ENCODE measurements at regions of chr1 and their contacts with region 1.

Region 1: DNA sequence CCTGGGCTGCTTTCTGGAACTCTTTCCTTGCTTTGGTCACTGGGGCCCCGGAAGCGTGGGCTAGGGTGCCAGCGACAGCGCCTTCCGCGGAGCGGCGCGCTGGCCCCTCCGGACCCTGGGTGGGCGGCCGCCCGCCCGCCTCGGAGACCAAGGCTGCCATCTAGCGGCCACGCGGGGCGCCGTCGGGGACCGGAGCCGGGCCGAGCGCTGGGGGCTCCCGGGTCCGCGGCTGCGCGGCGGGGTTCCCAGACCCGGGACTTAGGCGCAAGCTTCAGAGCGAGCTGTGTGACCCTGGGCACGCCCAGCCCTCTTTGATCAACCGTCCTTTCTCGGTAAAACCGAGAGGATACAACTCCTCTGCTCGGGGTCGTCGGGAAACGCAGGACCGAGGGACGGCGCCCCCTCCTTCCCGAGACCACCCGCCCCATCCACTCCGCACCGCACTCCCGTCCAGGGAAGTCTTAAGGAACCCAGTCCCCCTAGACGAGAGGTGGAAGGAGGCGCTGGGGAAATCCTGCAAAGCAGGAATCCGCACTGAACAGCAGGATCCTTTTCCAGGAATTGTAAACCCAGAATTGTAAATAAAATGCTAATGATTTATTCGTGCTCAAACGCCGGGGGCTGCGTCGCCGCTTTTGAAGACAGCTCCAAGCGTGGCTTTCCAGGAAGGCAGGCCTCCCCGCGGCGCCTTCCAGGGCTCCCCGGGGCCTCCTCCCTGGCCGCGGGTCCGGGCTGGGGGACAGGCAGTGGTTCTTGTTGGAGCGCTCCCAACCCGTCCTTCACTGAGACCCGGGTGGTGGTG is 41.2 kb downstream of the RRAGC start:
- DNase-seq: no peak
- H3K4me3 ChIP-seq: peak overlapping the region in 2 of 4 donors; percentile 27 to 39
- H3K27ac ChIP-seq: no peak overlapping the region
- H3K4me1 ChIP-seq: peaks cover 0 to 14% (median 13%) of the 10 kb centered on the region in 4 donors
- H3K27me3 ChIP-seq: peaks cover 33 to 69% (median 41%) of the 10 kb centered on the region in 3 donors
- CTCF ChIP-seq: peak in 2 of 4 experiments; percentile 24 to 77
- EP300 ChIP-seq: no peak
- POLR2A ChIP-seq: no peak

Region 2: DNA sequence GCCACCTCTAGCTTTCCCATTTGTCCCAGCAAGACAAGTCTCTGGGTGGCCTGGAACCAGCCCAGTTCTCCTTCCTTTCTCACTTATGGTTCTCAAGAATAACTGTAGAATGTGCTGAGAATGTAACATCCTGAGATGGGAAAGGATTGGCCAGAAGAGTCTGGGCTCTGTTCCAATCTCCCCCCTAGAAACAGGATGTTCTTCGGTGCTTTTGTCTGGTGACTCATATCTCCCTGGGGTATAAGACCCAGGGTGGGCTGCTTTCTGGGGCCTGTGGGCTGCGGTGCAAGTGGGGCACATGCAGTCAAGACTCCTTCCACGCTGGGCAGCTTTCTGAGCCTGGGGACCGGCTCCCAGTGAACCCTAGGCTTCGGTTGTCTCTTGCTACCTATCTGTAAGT is 520.5 kb before region 1 on chr1:
- intact Hi-C with region 1: no loop called
- DNase-seq: no peak
- H3K4me3 ChIP-seq: no peak overlapping the region
- H3K27ac ChIP-seq: no peak overlapping the region
- H3K4me1 ChIP-seq: no peaks in the 10 kb centered on the region
- H3K27me3 ChIP-seq: peaks cover 0 to 52% (median 3%) of the 10 kb centered on the region in 3 donors
- CTCF ChIP-seq: no peak
- EP300 ChIP-seq: no peak
- POLR2A ChIP-seq: no peak

Region 3: GRCh38 chr1:38474738-38475623 is 343.4 kb before region 1 on chr1:
- intact Hi-C with region 1: no loop called
- DNase-seq: no peak
- H3K4me3 ChIP-seq: no peak overlapping the region
- H3K27ac ChIP-seq: no peak overlapping the region
- H3K4me1 ChIP-seq: peaks cover 0 to 10% (median 4%) of the 10 kb centered on the region in 4 donors
- H3K27me3 ChIP-seq: peaks cover 6 to 61% (median 17%) of the 10 kb centered on the region in 3 donors
- CTCF ChIP-seq: no peak
- EP300 ChIP-seq: no peak
- POLR2A ChIP-seq: no peak

Region 4: GRCh38 chr1:38608202-38608864 is 210.0 kb before region 1 on chr1:
- intact Hi-C with region 1: loop called (anchors 10 kb)
- DNase-seq: no peak
- H3K4me3 ChIP-seq: no peak overlapping the region
- H3K27ac ChIP-seq: no peak overlapping the region
- H3K4me1 ChIP-seq: no peaks in the 10 kb centered on the region
- H3K27me3 ChIP-seq: peaks cover 0 to 10% (median 0%) of the 10 kb centered on the region in 3 donors
- CTCF ChIP-seq: peak in 1 of 4 experiments; percentile 33
- EP300 ChIP-seq: no peak
- POLR2A ChIP-seq: no peak

Region 5: GRCh38 chr1:38746941-38747600 is 71.3 kb before region 1 on chr1:
- intact Hi-C with region 1: no loop called
- DNase-seq: no peak
- H3K4me3 ChIP-seq: no peak overlapping the region
- H3K27ac ChIP-seq: no peak overlapping the region
- H3K4me1 ChIP-seq: no peaks in the 10 kb centered on the region
- H3K27me3 ChIP-seq: peaks cover 0 to 5% (median 0%) of the 10 kb centered on the region in 3 donors
- CTCF ChIP-seq: no peak
- EP300 ChIP-seq: no peak
- POLR2A ChIP-seq: no peak

Region 6: DNA sequence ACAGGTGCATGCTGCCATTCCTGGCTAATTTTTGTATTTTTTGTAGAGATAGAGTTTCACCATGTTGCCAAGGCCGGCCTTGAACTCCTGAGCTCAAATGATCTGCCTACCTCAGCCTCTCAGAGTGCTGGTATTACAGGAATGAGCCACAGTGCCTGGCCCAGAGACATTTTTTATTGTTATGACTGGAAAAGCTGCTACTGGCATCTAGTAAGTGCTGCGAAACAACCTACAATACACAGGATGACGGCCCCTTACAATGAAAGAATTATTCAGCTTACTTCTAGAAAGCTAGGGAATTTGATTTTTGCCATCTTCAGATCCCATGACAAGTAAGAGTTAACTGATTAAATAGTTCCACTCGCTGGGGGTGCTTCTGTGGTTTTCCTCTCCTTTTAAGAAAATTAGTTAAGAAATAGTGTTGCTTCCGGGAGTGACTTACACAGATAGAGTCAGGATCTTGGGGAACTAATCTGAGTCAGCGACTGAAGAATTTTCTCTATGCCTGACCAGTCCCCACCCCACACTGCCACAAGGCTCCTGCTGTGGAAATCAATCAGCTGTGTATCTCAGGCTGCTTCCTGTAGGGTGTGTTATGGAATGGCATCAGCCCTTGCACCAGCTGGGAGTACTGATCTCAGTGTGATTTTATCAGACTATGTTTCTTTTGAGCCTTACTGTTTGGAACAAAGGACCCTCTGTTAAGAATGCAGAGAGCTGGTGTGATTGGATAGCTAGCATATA is 580.1 kb after region 1 on chr1:
- intact Hi-C with region 1: no loop called
- DNase-seq: peak; percentile 82
- H3K4me3 ChIP-seq: no peak overlapping the region
- H3K27ac ChIP-seq: peak overlapping the region; percentile 52 to 84 (median 82)
- H3K4me1 ChIP-seq: peaks cover 0 to 61% (median 57%) of the 10 kb centered on the region in 4 donors
- H3K27me3 ChIP-seq: no peaks in the 10 kb centered on the region
- CTCF ChIP-seq: no peak
- EP300 ChIP-seq: no peak
- POLR2A ChIP-seq: no peak

Measured in sigmoid colon (tissue), 7 donors.